ENCODE measurements at regions of chr11 and their contacts with region 1.

Region 1: DNA sequence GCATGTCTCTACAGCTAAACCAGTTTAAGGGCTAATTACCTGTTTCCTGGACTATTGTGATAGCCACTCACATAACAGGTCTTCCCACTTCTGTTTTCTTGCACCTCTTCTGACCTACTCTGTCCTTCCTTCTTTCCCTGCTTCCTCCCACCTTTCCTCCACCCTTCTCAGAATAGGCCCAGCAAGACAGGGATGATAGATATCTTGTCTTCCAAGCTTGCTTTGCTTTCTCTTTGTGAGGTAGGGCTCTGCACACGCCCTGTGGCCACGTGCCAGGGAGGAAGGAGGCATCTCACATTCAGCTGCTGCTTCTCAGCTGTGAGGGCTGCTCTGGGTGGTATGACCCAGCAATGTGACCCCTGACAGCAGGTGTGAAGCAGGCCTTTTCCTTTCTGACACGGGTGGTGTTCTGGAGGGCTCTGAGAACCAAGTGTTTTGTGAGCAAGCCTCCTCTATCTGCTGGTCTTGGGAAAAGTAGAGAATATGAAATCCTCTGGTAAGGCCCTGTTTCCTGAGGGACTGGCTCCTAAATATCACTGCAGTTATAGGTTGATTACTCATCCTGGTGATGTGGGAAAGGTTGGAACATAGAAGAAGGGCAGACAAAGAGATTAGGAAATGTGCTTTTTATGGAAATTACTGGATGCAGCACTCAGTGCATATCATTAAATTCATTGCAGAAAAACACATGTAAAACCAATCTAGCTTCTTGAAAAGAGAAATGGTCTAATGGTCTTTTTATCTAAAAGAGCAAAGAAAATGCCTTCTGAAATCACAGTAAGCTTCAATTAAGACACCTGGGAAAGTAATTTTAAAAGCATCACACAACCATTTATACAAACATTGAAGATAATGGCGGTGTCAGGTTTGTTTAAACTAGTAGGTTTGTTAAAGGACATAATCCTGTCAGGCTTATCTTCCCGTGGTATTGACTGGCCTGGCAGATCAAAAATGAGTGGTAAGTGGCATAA is 8.5 kb downstream of the AMOTL1 start:
- DNase-seq: peak; percentile 64 to 94
- H3K4me3 ChIP-seq: peak overlapping the region; percentile 36; the same call in 1 of the 2 replicates
- H3K27ac ChIP-seq: peak overlapping the region; percentile 83
- H3K4me1 ChIP-seq: peaks cover 88% of the 10 kb centered on the region
- H3K27me3 ChIP-seq: no peaks in the 10 kb centered on the region
- CTCF ChIP-seq: no peak

Region 2: DNA sequence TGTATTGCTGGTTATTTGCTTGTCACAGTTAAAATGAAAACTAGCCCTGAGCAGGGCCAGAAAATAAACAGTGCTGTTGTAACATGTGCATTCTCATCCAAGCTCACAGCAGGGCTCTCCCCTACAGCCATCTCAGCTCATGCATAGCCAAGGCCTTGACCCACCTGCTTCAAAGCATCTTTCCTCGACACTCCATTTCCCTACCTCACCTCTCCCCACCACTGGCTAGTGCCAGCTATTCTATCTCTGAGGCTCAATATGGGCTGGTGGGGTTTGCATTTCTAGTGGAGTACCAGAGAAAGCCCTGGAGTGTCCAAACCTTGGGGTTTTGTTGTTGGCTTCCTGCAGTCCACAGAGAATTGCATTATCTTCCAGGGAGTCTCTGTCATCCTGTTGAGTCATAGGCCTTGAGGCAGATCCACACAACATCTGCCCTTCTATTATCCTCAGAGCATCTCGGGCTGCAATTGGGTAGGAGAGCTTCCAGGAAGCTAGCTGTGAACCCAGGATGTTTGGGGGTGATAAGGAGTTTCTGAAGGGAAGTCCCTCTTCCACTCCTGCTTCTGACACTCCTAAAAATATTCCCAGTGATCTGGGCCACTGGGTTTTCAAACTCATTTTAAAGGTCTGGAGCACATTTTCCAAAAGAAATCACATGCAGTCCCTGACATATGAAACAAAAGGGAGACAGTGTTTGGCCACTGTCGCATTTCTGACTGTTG is 44.6 kb before region 1 on chr11:
- CTCF ChIA-PET with region 1: no interaction called
- POLR2A ChIA-PET with region 1: no interaction called
- intact Hi-C with region 1: loop called (anchors 5 kb)
- DNase-seq: peak in 1 of 2 experiments; percentile 83
- H3K4me3 ChIP-seq: no peak overlapping the region
- H3K27ac ChIP-seq: peak overlapping the region; percentile 86
- H3K4me1 ChIP-seq: peaks cover 99% of the 10 kb centered on the region
- H3K27me3 ChIP-seq: no peaks in the 10 kb centered on the region
- CTCF ChIP-seq: no peak

Region 3: GRCh38 chr11:94794287-94795168 is 17.9 kb after region 1 on chr11:
- CTCF ChIA-PET with region 1: no interaction called
- POLR2A ChIA-PET with region 1: no interaction called
- intact Hi-C with region 1: loop called (anchors 1 kb)
- DNase-seq: peak; percentile 70 to 97
- H3K4me3 ChIP-seq: peak overlapping the region; percentile 34
- H3K27ac ChIP-seq: peak overlapping the region; percentile 91
- H3K4me1 ChIP-seq: peaks cover 76% of the 10 kb centered on the region
- H3K27me3 ChIP-seq: no peaks in the 10 kb centered on the region
- CTCF ChIP-seq: no peak